ENCODE measurements at regions of chr3 and their contacts with region 1.

Region 1: DNA sequence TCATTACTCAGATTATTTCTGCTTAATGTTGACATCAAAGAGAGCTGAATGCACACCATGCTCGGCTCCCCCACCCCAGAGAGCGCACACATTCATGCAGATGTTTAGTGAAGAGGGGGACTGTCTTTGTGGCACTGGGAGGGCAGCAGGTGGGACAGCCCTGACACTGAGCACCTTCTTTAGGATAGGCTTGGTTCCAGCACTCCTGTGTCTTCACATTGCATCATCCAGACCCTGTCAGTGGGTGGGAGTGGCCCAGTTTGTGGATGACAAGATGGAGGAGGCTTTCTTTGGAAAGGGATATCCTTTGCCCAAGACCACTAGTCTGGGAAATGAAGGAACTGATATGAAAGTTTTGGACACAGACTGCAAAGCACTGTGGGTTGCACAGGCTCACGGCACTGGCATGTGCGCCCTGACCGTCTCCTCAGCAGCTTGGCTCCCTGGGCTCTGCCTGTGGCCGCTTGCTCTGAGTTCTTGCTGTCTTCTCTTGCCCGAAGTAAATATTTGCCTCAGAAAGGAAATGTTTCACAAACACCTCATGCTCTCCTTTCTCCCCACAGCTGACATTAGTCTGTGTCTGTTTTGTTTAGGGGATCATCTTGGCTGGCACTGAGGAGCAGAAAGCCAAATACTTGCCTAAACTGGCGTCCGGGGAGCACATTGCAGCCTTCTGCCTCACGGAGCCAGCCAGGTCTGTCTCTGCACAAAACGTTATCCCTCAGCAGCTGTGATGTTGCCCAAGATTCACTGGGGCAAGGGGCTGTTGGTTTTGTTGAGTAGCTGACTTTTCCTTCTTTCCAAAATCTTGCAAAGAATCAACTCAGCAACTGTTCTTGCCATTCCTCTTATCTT is 16.6 kb downstream of the ACAD9 start:
- DNase-seq: peak; percentile 8
- ATAC-seq: peak; percentile 21
- H3K4me3 ChIP-seq: no peak overlapping the region
- H3K27ac ChIP-seq: peak overlapping the region; percentile 4; the same call in 1 of the 2 replicates
- H3K4me1 ChIP-seq: no peaks in the 10 kb centered on the region; the same call in 1 of the 2 replicates
- H3K27me3 ChIP-seq: no peaks in the 10 kb centered on the region
- CTCF ChIP-seq: no peak
- POLR2A ChIP-seq: no peak
- RAD21 ChIP-seq: no peak

Region 2: GRCh38 chr3:128917291-128917690 is 21.2 kb after region 1 on chr3:
- CTCF ChIA-PET with region 1: no interaction called
- POLR2A ChIA-PET with region 1: no interaction called
- dilution Hi-C with region 1: no loop called
- in situ Hi-C with region 1: no loop called
- intact Hi-C with region 1: loop called (anchors 2 kb)
- DNase-seq: no peak
- ATAC-seq: no peak
- H3K4me3 ChIP-seq: no peak overlapping the region
- H3K27ac ChIP-seq: no peak overlapping the region
- H3K4me1 ChIP-seq: no peaks in the 10 kb centered on the region
- H3K27me3 ChIP-seq: no peaks in the 10 kb centered on the region
- CTCF ChIP-seq: no peak
- POLR2A ChIP-seq: no peak
- RAD21 ChIP-seq: no peak